H1 (cell line): ENCODE measurements at regions of chr15 and their contacts with region 1.

Region 1: DNA sequence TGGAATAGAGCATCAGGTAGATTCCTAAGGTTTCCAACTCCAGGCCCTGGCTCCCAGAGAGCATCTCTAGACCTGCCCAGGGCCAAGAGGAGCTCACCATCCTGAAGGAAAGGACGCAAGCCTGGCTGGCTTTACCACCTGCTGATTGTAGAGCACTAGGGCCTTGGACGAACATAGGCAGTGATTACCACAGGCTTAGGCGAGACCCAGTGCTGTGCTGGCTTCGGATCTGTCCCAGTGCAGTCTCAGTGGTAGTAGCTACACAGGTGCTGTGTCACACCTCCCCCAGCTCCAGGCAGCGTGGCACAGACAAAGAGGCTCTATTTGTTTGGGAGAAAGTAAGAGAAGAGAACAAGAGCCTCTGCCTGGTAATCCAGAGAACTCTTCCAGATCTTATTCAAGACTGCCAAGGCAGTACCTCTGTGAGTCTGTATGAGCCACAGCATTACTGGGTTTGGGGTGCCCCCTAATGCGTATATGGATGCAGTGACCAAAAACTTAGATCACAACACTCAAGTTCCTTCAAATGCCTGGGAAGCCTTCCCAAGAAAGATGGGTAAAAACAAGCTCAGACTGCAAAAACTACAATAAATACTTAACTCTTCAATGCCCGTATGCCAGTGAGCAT is 25.4 kb downstream of the ISG20 start:
- DNase-seq: peak in 1 of 2 experiments; percentile 47
- H3K4me3 ChIP-seq: no peak overlapping the region
- H3K27ac ChIP-seq: no peak overlapping the region
- H3K4me1 ChIP-seq: no peaks in the 10 kb centered on the region
- H3K27me3 ChIP-seq: no peaks in the 10 kb centered on the region
- CTCF ChIP-seq: peak in 2 of 3 experiments; percentile 51; a peak in 3 of 4 replicates
- EP300 ChIP-seq: no peak
- POLR2A ChIP-seq: no peak
- RAD21 ChIP-seq: peak; percentile 75 to 78

Region 2: DNA sequence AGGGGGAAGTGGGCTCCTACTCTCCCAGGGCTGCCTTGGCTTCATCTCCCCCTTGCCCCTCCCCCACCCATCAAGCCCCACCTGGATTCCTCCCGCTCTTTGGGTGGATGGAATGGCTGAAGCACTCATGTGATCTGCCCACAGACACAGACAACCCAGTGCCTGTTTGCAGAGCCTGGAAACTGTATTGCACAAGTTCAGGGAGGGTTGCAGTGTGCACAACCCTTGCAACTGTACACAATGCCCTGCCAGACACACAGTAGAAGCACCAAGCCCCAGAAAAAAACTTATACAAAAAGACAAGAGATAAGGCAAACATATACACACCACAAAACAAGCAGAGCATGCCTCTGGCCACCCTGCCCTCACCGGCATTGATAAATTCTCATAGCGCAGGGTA is 513.8 kb before region 1 on chr15:
- CTCF ChIA-PET with region 1: no interaction called
- POLR2A ChIA-PET with region 1: no interaction called
- DNase-seq: no peak
- H3K4me3 ChIP-seq: no peak overlapping the region
- H3K27ac ChIP-seq: no peak overlapping the region
- H3K4me1 ChIP-seq: peaks cover 0 to 4% (median 3%) of the 10 kb centered on the region in 4 experiments; a peak in 3 of 7 replicates
- H3K27me3 ChIP-seq: no peaks in the 10 kb centered on the region
- CTCF ChIP-seq: no peak
- EP300 ChIP-seq: no peak
- POLR2A ChIP-seq: no peak
- RAD21 ChIP-seq: no peak

Region 3: DNA sequence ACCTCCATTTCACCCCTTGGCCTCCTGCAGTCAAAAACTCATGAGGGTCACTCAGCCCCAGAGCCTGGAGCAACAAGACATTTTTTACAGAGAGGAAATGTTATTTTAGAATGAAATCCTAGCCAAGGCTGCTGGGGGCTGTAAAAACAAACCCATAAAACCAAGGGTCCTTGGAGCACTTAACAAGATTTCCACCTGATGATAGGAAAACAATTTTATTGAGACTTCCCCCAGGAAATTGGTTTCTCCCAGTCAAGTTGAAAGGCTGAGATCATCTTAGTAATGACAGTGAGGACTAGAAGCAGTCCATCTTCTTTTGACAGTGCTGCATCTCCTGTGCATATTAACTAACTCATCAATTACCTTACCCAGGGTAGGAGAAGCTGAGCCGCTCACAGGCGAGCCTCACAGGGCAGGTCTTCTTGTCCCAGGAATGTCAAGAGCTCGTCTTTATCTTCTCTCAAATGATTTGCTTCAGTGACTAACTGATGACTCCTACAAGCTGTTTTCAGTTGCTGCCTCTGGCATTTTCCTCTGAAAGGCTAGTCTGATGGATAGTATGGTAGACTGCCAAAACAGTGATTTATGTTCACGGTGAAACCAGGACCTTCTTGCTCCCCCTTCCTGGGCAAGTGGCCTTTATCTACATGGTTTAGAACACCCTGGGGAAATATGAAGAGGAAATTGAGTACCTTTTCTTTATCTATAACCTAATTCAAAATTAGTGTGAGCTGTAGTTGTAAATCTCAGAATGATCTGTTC is 77.7 kb before region 1 on chr15:
- CTCF ChIA-PET with region 1: no interaction called
- POLR2A ChIA-PET with region 1: no interaction called
- DNase-seq: no peak
- H3K4me3 ChIP-seq: no peak overlapping the region
- H3K27ac ChIP-seq: no peak overlapping the region
- H3K4me1 ChIP-seq: no peaks in the 10 kb centered on the region
- H3K27me3 ChIP-seq: no peaks in the 10 kb centered on the region
- CTCF ChIP-seq: no peak
- EP300 ChIP-seq: no peak
- POLR2A ChIP-seq: no peak
- RAD21 ChIP-seq: no peak

Region 4: DNA sequence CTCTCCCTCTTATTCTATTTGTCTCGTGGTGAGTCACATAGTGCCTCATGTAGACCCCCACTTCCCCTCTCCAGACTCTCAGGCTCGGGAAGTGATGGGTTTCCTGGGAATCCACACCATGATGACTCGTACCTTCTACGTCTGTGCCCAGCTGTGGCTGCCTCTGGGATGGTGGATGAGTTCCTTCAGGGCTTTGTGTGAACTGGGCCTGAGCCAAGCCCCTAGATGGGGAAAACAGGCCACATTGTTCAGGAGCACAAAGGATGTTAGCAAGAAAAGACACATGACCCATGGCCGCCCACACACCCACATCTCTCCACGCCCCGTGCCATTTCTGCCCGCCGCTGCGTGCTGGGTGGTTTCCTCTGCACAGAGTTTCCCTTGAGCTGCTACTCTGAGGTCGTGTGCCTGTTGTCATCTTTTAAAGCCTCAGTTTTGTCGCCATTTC is 15.0 kb before region 1 on chr15:
- CTCF ChIA-PET with region 1: interaction called, 28 read pairs
- POLR2A ChIA-PET with region 1: interaction called, 4 read pairs
- DNase-seq: no peak
- H3K4me3 ChIP-seq: no peak overlapping the region
- H3K27ac ChIP-seq: no peak overlapping the region
- H3K4me1 ChIP-seq: peaks cover 0 to 19% (median 10%) of the 10 kb centered on the region in 4 experiments; a peak in 6 of 7 replicates
- H3K27me3 ChIP-seq: no peaks in the 10 kb centered on the region
- CTCF ChIP-seq: no peak
- EP300 ChIP-seq: no peak
- POLR2A ChIP-seq: no peak
- RAD21 ChIP-seq: no peak

Region 5: GRCh38 chr15:88674661-88675060 is 10.4 kb after region 1 on chr15:
- CTCF ChIA-PET with region 1: interaction called, 28 read pairs
- POLR2A ChIA-PET with region 1: no interaction called
- DNase-seq: peak in 1 of 2 experiments; percentile 20
- H3K4me3 ChIP-seq: no peak overlapping the region
- H3K27ac ChIP-seq: no peak overlapping the region
- H3K4me1 ChIP-seq: no peaks in the 10 kb centered on the region
- H3K27me3 ChIP-seq: no peaks in the 10 kb centered on the region
- CTCF ChIP-seq: no peak
- EP300 ChIP-seq: no peak
- POLR2A ChIP-seq: no peak
- RAD21 ChIP-seq: no peak

Region 6: GRCh38 chr15:88745696-88746095 is 81.4 kb after region 1 on chr15:
- CTCF ChIA-PET with region 1: no interaction called
- POLR2A ChIA-PET with region 1: no interaction called
- DNase-seq: no peak
- H3K4me3 ChIP-seq: no peak overlapping the region
- H3K27ac ChIP-seq: no peak overlapping the region
- H3K4me1 ChIP-seq: peaks cover 0 to 6% (median 4%) of the 10 kb centered on the region in 4 experiments; a peak in 5 of 7 replicates
- H3K27me3 ChIP-seq: no peaks in the 10 kb centered on the region
- CTCF ChIP-seq: no peak
- EP300 ChIP-seq: no peak
- POLR2A ChIP-seq: no peak
- RAD21 ChIP-seq: no peak